ENCODE measurements at regions of chr1 and their contacts with region 1.

Region 1: DNA sequence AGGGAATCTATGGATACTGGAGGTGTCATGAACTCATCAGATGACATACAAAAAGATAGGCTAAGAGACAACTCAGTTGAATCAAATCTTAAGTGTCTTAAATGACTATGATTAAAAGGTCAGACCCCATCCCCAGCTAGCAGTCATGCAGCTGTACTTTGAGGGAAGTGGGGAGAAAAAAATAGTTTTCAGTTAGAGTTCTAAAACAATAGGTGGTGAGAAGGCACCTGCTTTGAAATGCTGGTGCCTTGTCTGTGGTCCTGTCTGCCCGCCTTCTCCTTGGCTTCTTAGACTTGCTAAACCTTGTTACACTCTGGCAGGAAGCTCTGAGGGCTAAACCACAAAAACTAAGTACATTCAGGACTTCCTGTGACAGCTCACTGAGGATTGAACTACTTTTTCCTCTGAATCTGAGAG is 15.3 kb downstream of the CD2 start:
- DNase-seq: peak; percentile 89
- H3K4me3 Mint-ChIP-seq: peak overlapping the region; percentile 61
- H3K27ac Mint-ChIP-seq: peak overlapping the region; percentile 96
- H3K4me1 Mint-ChIP-seq: peaks cover 92% of the 10 kb centered on the region
- H3K27me3 Mint-ChIP-seq: no peaks in the 10 kb centered on the region

Region 2: DNA sequence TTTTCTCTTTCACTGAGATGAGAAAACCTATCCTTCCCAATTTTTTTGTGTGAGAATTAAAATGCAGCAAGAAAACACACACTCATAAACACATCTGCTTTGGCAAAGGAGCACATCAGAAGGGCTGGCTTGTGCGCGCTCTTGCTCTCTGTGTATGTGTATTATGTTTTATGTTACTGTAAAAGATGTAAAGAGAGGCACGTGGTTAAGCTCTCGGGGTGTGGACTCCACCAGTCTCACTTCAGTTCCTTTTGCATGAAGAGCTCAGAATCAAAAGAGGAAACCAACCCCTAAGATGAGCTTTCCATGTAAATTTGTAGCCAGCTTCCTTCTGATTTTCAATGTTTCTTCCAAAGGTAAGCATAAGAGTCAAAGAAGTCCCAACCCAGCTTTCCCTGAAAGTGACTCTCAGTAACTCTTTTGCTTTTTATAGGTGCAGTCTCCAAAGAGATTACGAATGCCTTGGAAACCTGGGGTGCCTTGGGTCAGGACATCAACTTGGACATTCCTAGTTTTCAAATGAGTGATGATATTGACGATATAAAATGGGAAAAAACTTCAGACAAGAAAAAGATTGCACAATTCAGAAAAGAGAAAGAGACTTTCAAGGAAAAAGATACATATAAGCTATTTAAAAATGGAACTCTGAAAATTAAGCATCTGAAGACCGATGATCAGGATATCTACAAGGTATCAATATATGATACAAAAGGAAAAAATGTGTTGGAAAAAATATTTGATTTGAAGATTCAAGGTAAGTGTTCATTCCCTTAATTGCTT is 15.2 kb before region 1 on chr1 and contains the start of gene CD2:
- CTCF ChIA-PET with region 1: interaction called, 19 read pairs
- POLR2A ChIA-PET with region 1: interaction called, 32 read pairs
- DNase-seq: peak; percentile 78
- H3K4me3 Mint-ChIP-seq: peak within 1 kb of the TSS; percentile 95
- H3K27ac Mint-ChIP-seq: peak within 1 kb of the TSS; percentile 95
- H3K4me1 Mint-ChIP-seq: peaks cover 36% of the 10 kb centered on the region
- H3K27me3 Mint-ChIP-seq: no peaks in the 10 kb centered on the region
- total RNA-seq, gene CD2: 206 to 258 TPM

Region 3: DNA sequence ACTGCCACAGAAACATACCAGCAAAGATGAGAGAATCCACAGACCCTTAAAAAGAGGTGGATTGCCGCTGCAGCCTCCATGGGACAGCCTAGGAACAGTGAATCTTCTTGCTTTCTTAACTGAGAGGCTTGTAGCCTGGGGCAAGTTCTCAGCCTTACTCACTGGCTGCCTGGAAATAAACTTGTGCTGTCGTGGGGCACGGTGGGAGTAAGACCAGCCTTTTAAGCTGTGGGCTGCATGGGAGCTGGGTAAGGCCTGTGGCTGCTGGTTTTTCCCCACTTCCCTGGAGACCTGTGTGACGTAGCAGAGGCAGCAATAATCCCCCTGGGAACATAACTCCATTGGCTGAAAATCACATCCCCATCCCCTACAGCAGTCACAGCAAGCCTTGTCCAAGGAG is 15.4 kb after region 1 on chr1:
- CTCF ChIA-PET with region 1: interaction called, 34 read pairs
- POLR2A ChIA-PET with region 1: interaction called, 3 read pairs
- DNase-seq: no peak
- H3K4me3 Mint-ChIP-seq: no peak overlapping the region
- H3K27ac Mint-ChIP-seq: no peak overlapping the region
- H3K4me1 Mint-ChIP-seq: peaks cover 8% of the 10 kb centered on the region
- H3K27me3 Mint-ChIP-seq: no peaks in the 10 kb centered on the region